ENCODE measurements at regions of chr16 and their contacts with region 1.

Region 1: DNA sequence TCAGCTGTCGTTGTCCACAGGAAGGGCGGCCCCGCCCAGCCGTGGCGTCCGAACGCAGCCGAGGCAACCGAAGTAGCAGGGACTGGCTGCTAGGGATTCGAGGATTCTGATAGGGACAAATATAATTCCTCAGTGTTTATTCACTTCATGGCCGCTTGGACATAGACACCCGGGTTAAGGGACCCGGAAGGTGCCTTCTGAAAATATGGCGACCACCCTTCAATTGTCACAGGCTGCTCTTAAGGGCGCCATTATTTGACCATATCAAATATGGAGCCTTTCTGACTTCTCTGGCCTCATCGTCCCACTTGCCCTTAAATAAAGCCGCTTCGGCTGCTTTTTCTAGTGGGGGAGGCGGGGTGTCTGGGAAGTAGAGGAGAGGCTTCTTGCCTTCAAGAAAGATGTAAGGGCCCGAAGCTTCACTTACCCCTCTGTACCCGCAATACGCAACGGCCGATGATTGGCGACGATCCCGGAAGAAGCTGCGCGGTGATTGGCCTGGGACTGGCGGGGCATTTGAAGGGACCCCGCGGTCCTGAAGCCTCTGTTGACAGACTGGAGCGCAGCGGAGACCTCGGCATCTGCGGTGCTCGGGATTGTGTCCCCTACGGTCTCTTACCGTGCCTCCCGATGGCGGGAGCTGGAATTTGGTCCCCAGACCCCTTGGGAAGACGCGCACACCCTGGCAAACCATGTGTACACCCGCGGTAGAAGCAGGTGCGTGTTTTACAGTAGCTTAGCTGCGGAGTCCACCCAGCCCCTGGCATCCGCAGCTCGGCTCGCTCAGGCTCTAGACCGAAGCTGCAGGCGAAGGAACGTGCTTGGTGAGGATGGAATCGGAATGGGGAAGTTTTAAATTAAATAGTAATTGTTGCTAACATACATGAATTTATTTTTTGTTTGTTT is at the start of gene ZNF688:
- DNase-seq: peak; percentile 94 to 100 (median 97)
- H3K4me3 ChIP-seq: peak within 1 kb of the TSS; percentile 65 to 71
- H3K4me3 Mint-ChIP-seq: peak within 1 kb of the TSS; percentile 86 to 96 (median 91)
- H3K27ac ChIP-seq: peak within 1 kb of the TSS; percentile 90
- H3K27ac Mint-ChIP-seq: peak within 1 kb of the TSS; percentile 96 to 97 (median 97)
- H3K4me1 ChIP-seq: peaks cover 50% of the 10 kb centered on the region
- H3K4me1 Mint-ChIP-seq: peaks cover 22 to 51% (median 36%) of the 10 kb centered on the region in 4 donors
- H3K27me3 ChIP-seq: no peaks in the 10 kb centered on the region
- H3K27me3 Mint-ChIP-seq: no peaks in the 10 kb centered on the region
- total RNA-seq, gene ZNF688: 21.4 to 22.7 TPM

Region 2: GRCh38 chr16:30142672-30143346 is 429.1 kb before region 1 on chr16:
- CTCF ChIA-PET with region 1: no interaction called
- POLR2A ChIA-PET with region 1: no interaction called
- intact Hi-C with region 1: no loop called
- DNase-seq: peak in 4 of 5 donors; percentile 39 to 48 (median 43)
- H3K4me3 ChIP-seq: no peak overlapping the region
- H3K4me3 Mint-ChIP-seq: peak overlapping the region in 1 of 8 donors; percentile 25
- H3K27ac ChIP-seq: no peak overlapping the region
- H3K27ac Mint-ChIP-seq: peak overlapping the region in 5 of 7 donors; percentile 25 to 85 (median 62)
- H3K4me1 ChIP-seq: peaks cover 20% of the 10 kb centered on the region
- H3K4me1 Mint-ChIP-seq: peaks cover 12 to 27% (median 13%) of the 10 kb centered on the region in 4 donors
- H3K27me3 ChIP-seq: no peaks in the 10 kb centered on the region
- H3K27me3 Mint-ChIP-seq: no peaks in the 10 kb centered on the region

Region 3: GRCh38 chr16:30551781-30552180 is 20.2 kb before region 1 on chr16:
- CTCF ChIA-PET with region 1: interaction called, 22 read pairs
- POLR2A ChIA-PET with region 1: interaction called, 188 read pairs
- intact Hi-C with region 1: loop called (anchors 2 kb)
- DNase-seq: peak; percentile 80 to 91 (median 88)
- H3K4me3 ChIP-seq: peak overlapping the region in 1 of 2 donors; percentile 13
- H3K4me3 Mint-ChIP-seq: peak overlapping the region; percentile 76 to 85 (median 80)
- H3K27ac ChIP-seq: peak overlapping the region; percentile 60
- H3K27ac Mint-ChIP-seq: peak overlapping the region; percentile 94 to 98 (median 96)
- H3K4me1 ChIP-seq: peaks cover 66% of the 10 kb centered on the region
- H3K4me1 Mint-ChIP-seq: peaks cover 32 to 63% (median 49%) of the 10 kb centered on the region in 4 donors
- H3K27me3 ChIP-seq: no peaks in the 10 kb centered on the region
- H3K27me3 Mint-ChIP-seq: no peaks in the 10 kb centered on the region

Region 4: GRCh38 chr16:30609926-30610839 is 38.2 kb after region 1 on chr16 and contains the start of gene ZNF689:
- CTCF ChIA-PET with region 1: interaction called, 5 read pairs
- POLR2A ChIA-PET with region 1: interaction called, 38 read pairs
- intact Hi-C with region 1: loop called (anchors 1 kb)
- DNase-seq: peak; percentile 92 to 98 (median 95)
- H3K4me3 ChIP-seq: peak within 1 kb of the TSS; percentile 71 to 99
- H3K4me3 Mint-ChIP-seq: peak within 1 kb of the TSS; percentile 85 to 96 (median 94)
- H3K27ac ChIP-seq: peak within 1 kb of the TSS; percentile 97
- H3K27ac Mint-ChIP-seq: peak within 1 kb of the TSS; percentile 93 to 98 (median 96)
- H3K4me1 ChIP-seq: peaks cover 21% of the 10 kb centered on the region
- H3K4me1 Mint-ChIP-seq: peaks cover 10 to 18% (median 13%) of the 10 kb centered on the region in 4 donors
- H3K27me3 ChIP-seq: no peaks in the 10 kb centered on the region
- H3K27me3 Mint-ChIP-seq: no peaks in the 10 kb centered on the region
- total RNA-seq, gene ZNF689: 13.1 to 14.5 TPM

Measured in CD4-positive, alpha-beta memory T cell (primary cell).